H1 (cell line): ENCODE measurements at regions of chr16 and their contacts with region 1.

Region 1: DNA sequence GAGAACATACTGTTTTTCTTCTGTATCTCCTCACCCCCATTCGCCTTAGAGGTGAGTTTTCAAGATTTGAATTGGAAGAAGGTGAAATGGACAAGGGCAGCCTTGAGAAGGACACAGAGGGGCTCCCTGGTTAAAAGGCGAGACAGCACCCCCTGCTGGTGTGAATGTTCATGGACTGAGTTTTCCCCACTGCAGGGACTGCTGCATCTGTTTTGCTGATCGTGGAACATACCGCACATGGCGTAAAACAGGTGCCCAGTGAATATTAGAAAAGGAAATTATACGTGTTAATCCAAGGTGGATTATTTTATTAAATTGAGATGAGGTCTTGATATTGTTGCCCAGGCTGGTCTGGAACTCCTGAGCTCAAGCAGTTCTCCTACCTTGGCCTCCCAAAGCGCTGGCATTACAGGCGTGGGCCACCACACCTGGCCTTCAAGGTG is 54.5 kb downstream of the NDE1 start:
- DNase-seq: peak; percentile 33 to 92
- H3K4me3 ChIP-seq: no peak overlapping the region
- H3K27ac ChIP-seq: no peak overlapping the region
- H3K4me1 ChIP-seq: no peaks in the 10 kb centered on the region; a peak in 1 of 7 replicates
- H3K27me3 ChIP-seq: no peaks in the 10 kb centered on the region
- CTCF ChIP-seq: peak; percentile 66 to 85 (median 84)
- EP300 ChIP-seq: no peak
- POLR2A ChIP-seq: no peak
- RAD21 ChIP-seq: peak; percentile 73 to 75

Region 2: DNA sequence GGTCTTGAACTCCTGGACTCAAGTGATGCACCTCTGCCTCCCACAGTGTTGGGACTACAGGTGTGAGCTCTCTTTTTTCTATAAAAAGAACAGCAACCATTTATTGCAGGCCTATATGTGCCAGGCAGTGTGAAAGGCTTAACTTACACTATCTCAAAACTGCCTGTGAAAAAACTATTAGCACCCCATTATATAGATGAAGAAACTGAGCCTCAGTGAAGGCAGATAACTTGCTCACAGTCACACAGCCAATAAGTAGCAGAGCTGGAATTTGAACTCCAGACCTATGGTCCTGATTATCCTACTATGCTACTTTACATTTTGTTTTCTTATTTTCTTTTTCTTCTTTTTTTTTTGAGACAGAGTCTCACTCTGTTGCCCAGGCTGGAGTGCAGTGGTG is 39.5 kb before region 1 on chr16:
- CTCF ChIA-PET with region 1: no interaction called
- POLR2A ChIA-PET with region 1: no interaction called
- DNase-seq: no peak
- H3K4me3 ChIP-seq: no peak overlapping the region
- H3K27ac ChIP-seq: no peak overlapping the region
- H3K4me1 ChIP-seq: no peaks in the 10 kb centered on the region
- H3K27me3 ChIP-seq: no peaks in the 10 kb centered on the region
- CTCF ChIP-seq: no peak
- EP300 ChIP-seq: no peak
- POLR2A ChIP-seq: no peak
- RAD21 ChIP-seq: no peak

Region 3: DNA sequence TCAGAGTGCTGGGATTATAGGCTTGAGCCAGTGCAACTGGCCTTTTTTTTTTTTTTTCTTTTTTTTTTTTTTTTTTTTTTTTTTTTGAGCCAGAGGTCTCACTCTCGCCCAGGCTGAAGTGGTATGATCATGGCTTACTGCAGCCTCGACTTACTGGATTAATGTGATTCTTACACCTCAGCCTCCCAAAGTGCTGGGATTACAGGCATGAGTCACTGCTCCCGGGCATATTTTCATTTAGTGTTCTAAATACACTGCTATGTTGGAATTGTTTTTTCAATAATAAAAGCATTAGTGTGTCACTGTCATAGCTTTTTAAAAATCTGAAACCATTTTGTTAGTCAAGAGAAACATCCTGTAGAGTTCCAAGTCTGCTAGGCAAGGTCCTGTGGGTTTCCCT is 14.3 kb before region 1 on chr16:
- CTCF ChIA-PET with region 1: interaction called, 23 read pairs
- POLR2A ChIA-PET with region 1: interaction called, 3 read pairs
- DNase-seq: no peak
- H3K4me3 ChIP-seq: no peak overlapping the region
- H3K27ac ChIP-seq: no peak overlapping the region
- H3K4me1 ChIP-seq: no peaks in the 10 kb centered on the region
- H3K27me3 ChIP-seq: no peaks in the 10 kb centered on the region
- CTCF ChIP-seq: no peak
- EP300 ChIP-seq: no peak
- POLR2A ChIP-seq: no peak
- RAD21 ChIP-seq: no peak

Region 4: DNA sequence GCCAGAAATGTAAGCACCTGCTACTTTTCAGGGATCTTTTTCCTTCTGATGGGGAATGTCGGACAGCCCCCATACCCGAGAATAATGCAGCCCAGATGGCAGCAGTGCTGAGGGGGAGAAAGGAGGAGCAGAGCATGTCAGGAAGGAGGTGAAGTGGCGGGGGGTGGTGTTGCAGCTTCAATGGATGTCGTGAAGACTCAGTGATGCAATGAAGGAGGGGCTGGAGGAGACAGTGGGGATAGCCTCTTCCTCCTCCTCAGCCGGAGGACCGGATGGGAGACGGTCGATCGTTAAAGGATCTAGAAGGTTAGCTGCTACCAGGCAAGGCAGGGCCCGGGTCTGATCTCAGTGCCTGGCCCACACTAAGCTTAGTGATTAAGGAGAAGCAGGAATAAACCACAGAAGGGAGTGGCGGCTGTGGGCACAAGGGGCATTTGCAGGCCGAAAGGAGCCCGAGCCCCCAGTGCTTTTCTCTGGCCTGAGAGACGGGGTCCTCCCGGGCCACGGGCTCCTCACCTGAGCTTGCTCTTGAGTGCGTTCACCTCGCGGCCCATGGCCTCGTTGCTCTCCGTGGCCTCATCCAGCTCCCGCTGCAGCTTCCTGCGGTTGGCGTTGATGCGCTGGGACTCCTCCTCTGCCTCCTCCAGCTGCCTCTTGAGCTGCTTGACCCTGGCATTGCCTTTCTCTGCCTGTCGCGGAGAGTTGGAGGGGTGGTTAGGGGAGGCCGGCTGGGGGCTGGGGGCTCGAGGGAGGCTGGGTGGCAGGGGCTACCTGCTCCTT is 10.0 kb after region 1 on chr16:
- CTCF ChIA-PET with region 1: interaction called, 28 read pairs
- POLR2A ChIA-PET with region 1: interaction called, 3 read pairs
- DNase-seq: no peak
- H3K4me3 ChIP-seq: no peak overlapping the region
- H3K27ac ChIP-seq: no peak overlapping the region
- H3K4me1 ChIP-seq: no peaks in the 10 kb centered on the region
- H3K27me3 ChIP-seq: no peaks in the 10 kb centered on the region
- CTCF ChIP-seq: no peak
- EP300 ChIP-seq: no peak
- POLR2A ChIP-seq: no peak
- RAD21 ChIP-seq: no peak

Region 5: GRCh38 chr16:15765880-15766279 is 61.3 kb after region 1 on chr16:
- CTCF ChIA-PET with region 1: no interaction called
- POLR2A ChIA-PET with region 1: no interaction called
- DNase-seq: peak in 1 of 2 experiments; percentile 50
- H3K4me3 ChIP-seq: no peak overlapping the region
- H3K27ac ChIP-seq: no peak overlapping the region
- H3K4me1 ChIP-seq: 0 out of 7 replicates have a peak, but pooled peaks cover 0 to 1% (median 0%) of the 10 kb centered on the region in 4 experiments
- H3K27me3 ChIP-seq: no peaks in the 10 kb centered on the region
- CTCF ChIP-seq: peak; percentile 37 to 76 (median 72)
- EP300 ChIP-seq: no peak
- POLR2A ChIP-seq: no peak
- RAD21 ChIP-seq: peak; percentile 77 to 85

Region 6: DNA sequence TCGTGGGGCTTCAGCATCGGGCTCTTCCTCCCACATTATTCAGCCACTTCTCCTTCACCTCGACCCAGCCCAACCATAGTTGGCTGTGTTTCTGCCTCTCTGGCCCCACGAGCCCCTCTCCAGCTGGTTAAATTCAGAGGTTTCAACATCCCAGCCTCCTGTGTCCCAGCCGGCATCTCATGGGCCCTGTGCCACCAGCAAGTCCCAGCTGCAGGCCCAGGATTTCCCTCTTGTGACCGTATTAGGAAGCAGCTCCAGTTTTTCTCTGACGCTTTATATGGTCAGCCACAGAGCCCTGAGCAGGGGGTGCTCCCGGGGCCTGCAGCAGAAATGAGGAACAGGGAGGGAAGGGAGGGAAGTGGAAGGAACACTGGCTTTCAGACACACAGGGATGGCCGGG is 124.9 kb after region 1 on chr16:
- CTCF ChIA-PET with region 1: no interaction called
- POLR2A ChIA-PET with region 1: no interaction called
- DNase-seq: no peak
- H3K4me3 ChIP-seq: no peak overlapping the region
- H3K27ac ChIP-seq: no peak overlapping the region
- H3K4me1 ChIP-seq: no peaks in the 10 kb centered on the region
- H3K27me3 ChIP-seq: no peaks in the 10 kb centered on the region
- CTCF ChIP-seq: peak in 1 of 3 experiments; percentile 9; a peak in 1 of 4 replicates
- EP300 ChIP-seq: no peak
- POLR2A ChIP-seq: no peak
- RAD21 ChIP-seq: no peak